K562 (cell line): ENCODE measurements at regions of chr7 and their contacts with region 1.

Region 1: GRCh38 chr7:158976849-158977593 is 120.7 kb downstream of the DYNC2I1 start:
- DNase-seq: peak; percentile 92 to 95 (median 93)
- ATAC-seq: peak; percentile 87
- H3K4me3 ChIP-seq: peak overlapping the region; percentile 27
- H3K27ac ChIP-seq: no peak overlapping the region; the same call in 2 of the 3 replicates
- H3K4me1 ChIP-seq: peaks cover 20 to 40% of the 10 kb centered on the region in 2 experiments
- H3K27me3 ChIP-seq: peaks cover 23 to 27% of the 10 kb centered on the region in 2 experiments
- CTCF ChIP-seq: peak; percentile 92 to 99 (median 97)
- EP300 ChIP-seq: no peak
- POLR2A ChIP-seq: no peak
- RAD21 ChIP-seq: peak; percentile 95 to 96

Region 2: GRCh38 chr7:158587162-158588084 is 389.6 kb before region 1 on chr7 and contains the start of gene PTPRN2:
- CTCF ChIA-PET with region 1: no interaction called
- POLR2A ChIA-PET with region 1: no interaction called
- in situ Hi-C with region 1: no loop called
- intact Hi-C with region 1: loop called (anchors 2 kb)
- DNase-seq: peak; percentile 86 to 100 (median 100)
- ATAC-seq: peak; percentile 98
- H3K4me3 ChIP-seq: peak within 1 kb of the TSS; percentile 25; the same call in 1 of the 2 replicates
- H3K27ac ChIP-seq: no peak within 1 kb of the TSS
- H3K4me1 ChIP-seq: peaks cover 0 to 22% of the 10 kb centered on the region in 2 experiments; a peak in 2 of 5 replicates
- H3K27me3 ChIP-seq: peaks cover 55 to 76% of the 10 kb centered on the region in 2 experiments
- CTCF ChIP-seq: no peak
- EP300 ChIP-seq: no peak
- POLR2A ChIP-seq: no peak
- RAD21 ChIP-seq: no peak; a peak in 1 of 4 replicates
- polyA plus RNA-seq, gene PTPRN2: not detected

Region 3: GRCh38 chr7:158766570-158767281 is 210.3 kb before region 1 on chr7:
- CTCF ChIA-PET with region 1: no interaction called
- POLR2A ChIA-PET with region 1: no interaction called
- in situ Hi-C with region 1: no loop called
- intact Hi-C with region 1: loop called (anchors 5 kb)
- DNase-seq: no peak
- ATAC-seq: no peak
- H3K4me3 ChIP-seq: no peak overlapping the region
- H3K27ac ChIP-seq: no peak overlapping the region
- H3K4me1 ChIP-seq: peaks cover 0 to 3% of the 10 kb centered on the region in 2 experiments; a peak in 1 of 5 replicates
- H3K27me3 ChIP-seq: no peaks in the 10 kb centered on the region
- CTCF ChIP-seq: no peak
- EP300 ChIP-seq: no peak
- POLR2A ChIP-seq: no peak
- RAD21 ChIP-seq: no peak

Region 4: DNA sequence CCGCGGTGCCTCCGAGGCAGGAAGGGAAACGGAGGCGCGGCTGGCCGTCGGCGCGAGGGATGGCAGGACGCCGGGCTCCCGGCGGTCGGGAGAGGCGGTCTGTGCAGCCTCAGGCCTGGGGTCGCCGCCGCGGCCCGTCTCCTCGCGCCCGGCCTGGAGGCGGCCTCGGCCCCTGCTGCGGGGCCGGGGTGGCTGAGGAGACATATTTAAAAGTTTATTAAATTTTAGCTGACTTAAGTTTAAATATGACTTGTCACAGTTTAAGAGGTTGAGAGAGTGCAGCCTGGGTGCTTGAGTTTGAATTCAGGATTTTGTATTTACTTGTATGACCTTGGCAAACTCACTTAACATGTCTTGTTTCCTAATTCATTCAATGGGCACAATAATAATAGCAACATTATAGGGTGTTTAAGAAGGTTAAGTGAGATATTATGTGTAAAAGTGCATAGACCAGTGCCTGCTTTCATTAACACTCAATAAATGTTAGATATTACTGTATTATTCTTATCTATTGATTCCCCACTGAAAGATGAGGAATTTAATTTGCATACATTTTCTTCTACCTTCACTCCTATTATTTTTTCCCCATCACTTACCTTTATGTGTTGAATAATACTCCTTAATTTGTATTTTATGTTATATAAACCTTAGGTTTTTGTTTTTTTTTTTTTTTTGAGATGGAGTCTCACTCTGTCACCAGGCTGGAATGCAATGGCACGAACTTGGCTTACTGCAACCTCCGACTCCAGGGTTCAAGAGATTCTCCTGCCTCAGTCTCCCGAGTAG is 119.9 kb before region 1 on chr7:
- CTCF ChIA-PET with region 1: no interaction called
- POLR2A ChIA-PET with region 1: no interaction called
- in situ Hi-C with region 1: no loop called
- intact Hi-C with region 1: loop called (anchors 1 kb)
- DNase-seq: peak in 1 of 4 experiments; percentile 66
- ATAC-seq: peak; percentile 34
- H3K4me3 ChIP-seq: peak overlapping the region; percentile 80
- H3K27ac ChIP-seq: peak overlapping the region; percentile 78
- H3K4me1 ChIP-seq: peaks cover 44 to 49% of the 10 kb centered on the region in 2 experiments
- H3K27me3 ChIP-seq: no peaks in the 10 kb centered on the region
- CTCF ChIP-seq: no peak
- EP300 ChIP-seq: no peak
- POLR2A ChIP-seq: no peak
- RAD21 ChIP-seq: no peak

Region 5: DNA sequence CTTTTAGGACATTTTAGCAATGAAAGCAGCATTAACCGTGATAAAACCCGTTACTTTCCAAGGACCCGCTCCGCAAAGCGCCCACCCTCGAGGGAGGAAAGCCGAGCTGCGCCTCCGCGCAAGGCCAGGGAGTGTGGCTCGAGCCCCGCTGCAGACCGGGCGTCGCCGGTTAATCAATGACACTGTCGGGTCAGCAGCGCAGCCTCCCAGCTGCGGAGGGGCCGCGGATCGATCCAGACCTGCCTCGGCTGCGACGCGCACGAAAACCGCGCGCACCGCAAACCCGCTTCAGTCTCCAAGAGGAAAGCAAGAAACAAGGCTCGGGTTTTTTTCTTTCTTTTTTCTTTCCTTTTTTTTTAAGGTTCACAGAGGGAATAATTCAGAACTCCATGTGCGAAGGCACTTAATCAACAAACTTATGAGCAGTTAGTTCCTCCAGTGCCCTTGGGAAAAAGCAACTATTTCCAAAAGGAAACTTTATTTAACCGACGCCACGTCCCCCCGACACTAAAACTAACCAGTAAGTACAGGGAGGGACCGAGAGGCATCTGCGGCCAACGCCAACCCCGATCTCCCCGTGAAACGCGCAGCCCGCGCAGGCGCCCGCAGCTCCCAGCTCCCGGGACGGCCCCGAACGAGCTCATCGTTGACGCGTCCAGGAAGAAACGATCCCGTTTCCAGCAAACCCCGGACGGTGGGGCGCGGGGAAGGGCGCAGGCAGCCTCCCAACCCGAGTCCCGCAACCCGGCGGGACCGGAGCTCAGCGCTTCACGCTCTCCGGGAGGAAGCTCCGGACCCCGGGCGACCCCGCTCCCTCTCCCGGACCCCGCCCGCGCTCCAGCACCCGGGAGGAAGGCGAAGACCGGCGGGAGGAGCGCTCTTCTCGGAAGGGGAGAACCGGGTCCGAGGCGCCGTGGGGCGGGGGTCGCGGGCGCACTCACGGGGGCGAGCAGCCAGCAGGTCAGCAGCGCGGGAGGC is 167.0 kb after region 1 on chr7:
- CTCF ChIA-PET with region 1: no interaction called
- POLR2A ChIA-PET with region 1: no interaction called
- in situ Hi-C with region 1: no loop called
- intact Hi-C with region 1: no loop called
- DNase-seq: no peak
- ATAC-seq: no peak
- H3K4me3 ChIP-seq: no peak overlapping the region
- H3K27ac ChIP-seq: no peak overlapping the region
- H3K4me1 ChIP-seq: peaks cover 0 to 6% of the 10 kb centered on the region in 2 experiments; a peak in 1 of 5 replicates
- H3K27me3 ChIP-seq: peaks cover 25 to 53% of the 10 kb centered on the region in 2 experiments
- CTCF ChIP-seq: no peak
- EP300 ChIP-seq: no peak
- POLR2A ChIP-seq: no peak
- RAD21 ChIP-seq: no peak